Activated CD4-positive, alpha-beta memory T cell treated with anti-CD3 and anti-CD28 coated beads for 36 hours (primary cell): ENCODE measurements at regions of chr1 and their contacts with region 1.

Region 1: GRCh38 chr1:39116868-39117728 is 87.4 kb upstream of the MACF1 start:
- DNase-seq: no peak
- H3K4me3 Mint-ChIP-seq: no peak overlapping the region
- H3K27ac Mint-ChIP-seq: no peak overlapping the region
- H3K4me1 Mint-ChIP-seq: peaks cover 3% of the 10 kb centered on the region
- H3K27me3 Mint-ChIP-seq: peaks cover 6% of the 10 kb centered on the region

Region 2: DNA sequence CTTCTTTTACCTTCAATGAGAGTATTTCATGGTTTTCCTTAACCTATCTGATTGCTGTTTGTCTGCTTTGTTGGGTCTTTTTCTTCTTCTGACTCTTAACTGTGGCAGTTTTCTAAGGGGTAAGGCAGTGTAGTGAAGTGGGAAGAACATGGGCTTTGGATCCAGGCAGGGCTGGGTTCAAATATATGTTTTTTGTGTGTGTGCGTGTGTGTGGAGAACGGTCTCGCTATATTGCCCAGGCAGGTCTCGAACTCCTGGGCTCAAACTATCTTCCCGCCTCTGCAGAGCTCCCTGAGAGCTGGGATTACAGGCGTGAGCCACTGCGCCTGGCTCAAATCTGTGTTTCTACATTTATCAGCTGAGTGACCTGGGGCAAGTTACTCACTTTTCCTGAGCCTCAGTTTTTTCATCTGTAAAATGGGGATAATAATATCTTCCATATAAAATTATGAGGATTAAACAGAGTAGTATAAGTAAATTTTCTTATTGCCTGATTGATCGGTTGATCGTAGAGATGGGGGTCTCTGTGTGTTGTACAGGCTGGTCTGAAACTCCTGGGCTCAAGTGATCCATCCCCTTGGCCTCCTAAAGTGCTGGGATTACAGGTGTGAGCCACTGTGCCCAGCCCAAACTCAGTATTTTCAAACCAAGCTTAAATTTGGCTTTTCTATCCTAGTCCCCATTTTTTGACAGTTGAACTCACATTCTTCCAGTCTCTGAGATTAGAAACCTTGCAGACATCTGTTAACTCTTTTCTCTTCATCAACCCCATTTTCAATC is 51.4 kb after region 1 on chr1:
- CTCF ChIA-PET with region 1: no interaction called
- POLR2A ChIA-PET with region 1: no interaction called
- intact Hi-C with region 1: loop called (anchors 1 kb)
- DNase-seq: no peak
- H3K4me3 Mint-ChIP-seq: no peak overlapping the region
- H3K27ac Mint-ChIP-seq: no peak overlapping the region
- H3K4me1 Mint-ChIP-seq: peaks cover 10% of the 10 kb centered on the region
- H3K27me3 Mint-ChIP-seq: peaks cover 3% of the 10 kb centered on the region